ENCODE measurements at regions of chr3 and their contacts with region 1.

Region 1: GRCh38 chr3:147119989-147120388 is 286.4 kb downstream of the ZIC4 start:
- DNase-seq: peak; percentile 13
- H3K4me3 ChIP-seq: no peak overlapping the region
- H3K27ac ChIP-seq: no peak overlapping the region
- H3K27me3 ChIP-seq: no peaks in the 10 kb centered on the region
- CTCF ChIP-seq: peak; percentile 80

Region 2: DNA sequence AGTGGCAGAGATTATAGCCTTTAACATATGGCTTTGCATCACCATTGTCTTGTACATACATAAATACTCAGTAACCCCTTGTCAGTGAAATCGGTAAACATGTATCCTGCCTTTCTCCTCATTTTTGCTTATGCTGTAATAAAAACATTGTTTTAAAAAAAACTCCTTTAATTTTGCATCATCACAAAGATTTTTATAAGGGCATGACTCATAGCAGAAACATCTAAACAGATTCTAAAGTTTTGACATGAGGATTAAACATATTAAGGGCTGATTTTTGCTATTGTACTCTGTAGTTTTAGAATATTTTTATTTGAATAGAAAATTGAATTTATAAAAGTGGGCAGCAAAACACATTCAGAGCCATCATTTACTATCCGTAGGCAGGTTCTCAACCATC is 10.5 kb after region 1 on chr3:
- CTCF ChIA-PET with region 1: interaction called, 25 read pairs
- POLR2A ChIA-PET with region 1: no interaction called
- DNase-seq: peak; percentile 8
- H3K4me3 ChIP-seq: no peak overlapping the region
- H3K27ac ChIP-seq: no peak overlapping the region
- H3K27me3 ChIP-seq: no peaks in the 10 kb centered on the region
- CTCF ChIP-seq: no peak

Region 3: GRCh38 chr3:147153830-147154539 is 34.0 kb after region 1 on chr3:
- CTCF ChIA-PET with region 1: no interaction called
- POLR2A ChIA-PET with region 1: no interaction called
- DNase-seq: no peak
- H3K4me3 ChIP-seq: no peak overlapping the region
- H3K27ac ChIP-seq: no peak overlapping the region
- H3K27me3 ChIP-seq: no peaks in the 10 kb centered on the region
- CTCF ChIP-seq: no peak

Region 4: DNA sequence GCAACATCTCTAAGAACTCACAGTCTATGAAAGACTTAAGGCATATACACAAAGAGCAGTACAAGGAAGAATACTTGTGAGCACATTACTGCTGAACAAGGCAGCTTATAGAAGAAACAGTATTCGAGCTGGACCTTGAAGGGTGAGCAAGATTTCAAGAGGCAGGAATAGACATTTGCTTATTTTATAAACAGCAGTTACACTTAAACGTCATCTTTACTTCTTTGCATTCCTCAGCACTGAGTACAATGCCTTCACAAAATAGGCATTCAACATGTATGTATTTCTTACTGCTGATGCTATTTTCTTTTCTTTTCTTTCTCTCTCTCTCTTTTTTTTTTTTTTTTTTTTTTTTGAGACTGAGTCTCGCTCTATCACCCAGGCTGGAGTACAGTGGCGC is 80.6 kb after region 1 on chr3:
- CTCF ChIA-PET with region 1: interaction called, 10 read pairs
- POLR2A ChIA-PET with region 1: no interaction called
- DNase-seq: peak; percentile 61
- H3K4me3 ChIP-seq: no peak overlapping the region
- H3K27ac ChIP-seq: no peak overlapping the region
- H3K27me3 ChIP-seq: no peaks in the 10 kb centered on the region
- CTCF ChIP-seq: no peak

Region 5: GRCh38 chr3:147246906-147247305 is 126.9 kb after region 1 on chr3:
- CTCF ChIA-PET with region 1: no interaction called
- POLR2A ChIA-PET with region 1: no interaction called
- DNase-seq: no peak
- H3K4me3 ChIP-seq: no peak overlapping the region
- H3K27ac ChIP-seq: no peak overlapping the region
- H3K27me3 ChIP-seq: no peaks in the 10 kb centered on the region
- CTCF ChIP-seq: no peak

Region 6: DNA sequence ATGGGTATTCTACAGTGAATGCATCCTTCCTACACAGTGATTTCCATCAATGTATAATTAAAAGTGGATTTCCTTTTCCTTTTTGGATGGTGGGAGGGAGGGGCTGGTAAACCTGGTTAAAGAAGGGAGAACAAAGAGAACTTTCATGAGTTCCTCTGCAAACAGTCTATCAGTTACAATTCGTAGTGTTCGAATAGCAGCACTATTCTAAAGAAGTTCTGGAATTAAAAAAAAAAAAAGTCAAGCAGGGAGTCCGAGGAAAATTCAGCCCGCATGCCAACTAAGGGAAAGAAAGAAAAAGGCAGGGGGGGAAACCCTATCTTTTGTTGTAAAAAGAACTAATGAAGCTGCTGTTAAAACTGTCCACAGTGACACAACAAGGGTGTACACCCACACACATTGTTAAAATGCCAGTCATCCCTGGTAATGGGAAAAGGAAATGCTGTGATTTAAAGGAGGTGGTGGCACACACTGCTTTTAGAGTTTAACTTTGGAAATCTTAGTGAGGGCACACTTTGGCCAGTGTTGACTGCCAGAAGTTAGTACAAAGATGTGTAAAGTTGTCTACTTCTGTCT is 810.3 kb after region 1 on chr3:
- CTCF ChIA-PET with region 1: interaction called, 10 read pairs
- POLR2A ChIA-PET with region 1: no interaction called
- DNase-seq: no peak
- H3K4me3 ChIP-seq: no peak overlapping the region
- H3K27ac ChIP-seq: no peak overlapping the region
- H3K27me3 ChIP-seq: no peaks in the 10 kb centered on the region
- CTCF ChIP-seq: no peak